Left lung (tissue), 14 donors: ENCODE measurements at regions of chr20 and their contacts with region 1.

Region 1: DNA sequence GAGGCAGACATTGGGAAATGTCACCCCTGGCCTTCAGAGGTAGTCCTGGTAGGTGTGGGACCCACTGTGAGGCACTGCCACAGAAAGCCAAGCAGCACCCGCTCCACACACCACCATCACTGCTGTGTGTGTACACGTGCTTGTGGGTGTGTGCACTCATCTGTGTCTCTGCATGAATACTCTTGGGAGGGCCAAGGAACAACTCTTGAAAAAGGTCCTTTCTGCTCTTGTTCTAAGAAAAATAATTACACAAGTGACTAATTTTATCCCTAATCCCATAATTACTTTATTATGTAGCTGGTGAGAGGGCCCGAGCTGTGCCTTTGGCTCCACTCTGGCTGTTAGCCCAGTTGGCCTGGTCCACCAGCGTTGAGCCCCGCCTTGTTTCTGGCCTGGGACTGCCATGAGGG is 21.7 kb upstream of the EPB41L1 start:
- DNase-seq: no peak
- ATAC-seq: no peak
- H3K4me3 ChIP-seq: no peak overlapping the region
- H3K27ac ChIP-seq: no peak overlapping the region
- H3K4me1 ChIP-seq: peaks cover 0 to 5% of the 10 kb centered on the region in 2 donors
- H3K27me3 ChIP-seq: no peaks in the 10 kb centered on the region
- CTCF ChIP-seq: no peak

Region 2: DNA sequence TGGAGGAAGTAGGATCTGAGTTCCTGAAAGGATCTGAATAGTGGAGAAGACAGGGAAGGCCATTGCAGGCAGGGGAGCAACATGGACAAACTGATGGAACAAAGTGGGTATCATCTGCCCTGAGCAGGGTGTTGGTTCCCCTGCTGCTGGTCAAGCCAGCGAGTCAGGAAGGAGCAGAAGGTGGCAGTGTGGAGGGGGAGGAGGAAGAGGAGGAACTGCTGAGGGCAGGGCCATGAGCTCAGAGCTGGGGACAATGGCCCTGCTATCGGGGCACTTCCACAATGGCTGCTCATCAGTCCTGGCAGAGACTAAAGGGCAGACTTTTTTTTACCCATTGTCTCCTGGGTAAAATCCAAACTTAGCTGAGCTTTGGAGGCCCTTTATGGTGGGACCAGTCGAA is 150.8 kb before region 1 on chr20:
- intact Hi-C with region 1: loop called in 1 of 2 experiments (anchors 10 kb)
- DNase-seq: no peak
- ATAC-seq: peak; percentile 20
- H3K4me3 ChIP-seq: no peak overlapping the region
- H3K27ac ChIP-seq: no peak overlapping the region
- H3K4me1 ChIP-seq: peaks cover 0 to 5% of the 10 kb centered on the region in 2 donors
- H3K27me3 ChIP-seq: no peaks in the 10 kb centered on the region
- CTCF ChIP-seq: no peak

Region 3: DNA sequence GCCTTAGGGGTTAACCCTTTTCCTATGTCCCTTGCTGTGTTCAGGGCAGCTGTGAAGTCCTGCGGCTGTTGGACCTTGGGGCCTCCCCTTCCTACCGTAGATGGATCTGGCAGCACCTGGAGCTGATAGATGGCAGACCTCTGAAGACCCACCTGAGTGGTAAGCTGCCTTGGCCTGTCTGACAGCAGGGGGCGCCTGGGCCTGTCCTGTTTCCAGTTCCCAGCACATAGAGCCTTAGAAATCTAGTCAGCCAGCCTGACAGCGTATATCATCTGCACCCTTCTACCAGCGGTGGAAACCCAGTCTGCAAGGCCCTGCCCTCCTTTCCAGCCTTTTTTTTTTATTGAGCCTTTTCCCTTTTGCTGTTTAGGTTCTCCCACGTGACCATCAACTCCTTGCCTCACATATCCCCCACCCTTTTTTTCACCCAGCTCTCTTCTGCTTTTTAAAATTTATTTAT is 137.8 kb before region 1 on chr20:
- intact Hi-C with region 1: loop called in 1 of 2 experiments (anchors 5 kb)
- DNase-seq: peak; percentile 70 to 93 (median 83)
- ATAC-seq: peak; percentile 98
- H3K4me3 ChIP-seq: no peak overlapping the region
- H3K27ac ChIP-seq: no peak overlapping the region
- H3K4me1 ChIP-seq: peaks cover 0 to 10% of the 10 kb centered on the region in 2 donors
- H3K27me3 ChIP-seq: no peaks in the 10 kb centered on the region
- CTCF ChIP-seq: peak; percentile 76 to 86